ENCODE measurements at regions of chr1 and their contacts with region 1.

Region 1: GRCh38 chr1:19651141-19651737 is 7.1 kb downstream of the NBL1 start:
- DNase-seq: peak; percentile 53 to 71 (median 70)
- H3K4me3 ChIP-seq: peak overlapping the region in 2 of 7 experiments; percentile 20 to 30
- H3K27ac ChIP-seq: no peak overlapping the region
- H3K4me1 ChIP-seq: peaks cover 0 to 39% (median 25%) of the 10 kb centered on the region in 4 experiments
- H3K27me3 ChIP-seq: no peaks in the 10 kb centered on the region

Region 2: GRCh38 chr1:19341201-19342072 is 309.8 kb before region 1 on chr1:
- CTCF ChIA-PET with region 1: interaction called, 14 read pairs
- POLR2A ChIA-PET with region 1: no interaction called
- DNase-seq: peak; percentile 63 to 80 (median 70)
- H3K4me3 ChIP-seq: no peak overlapping the region
- H3K27ac ChIP-seq: no peak overlapping the region
- H3K4me1 ChIP-seq: peaks cover 0 to 12% (median 5%) of the 10 kb centered on the region in 4 experiments
- H3K27me3 ChIP-seq: no peaks in the 10 kb centered on the region

Region 3: GRCh38 chr1:19390901-19391595 is 260.2 kb before region 1 on chr1:
- CTCF ChIA-PET with region 1: interaction called, 40 read pairs
- POLR2A ChIA-PET with region 1: no interaction called
- DNase-seq: peak; percentile 93 to 98 (median 97)
- H3K4me3 ChIP-seq: peak overlapping the region in 6 of 7 experiments; percentile 40 to 77 (median 48)
- H3K27ac ChIP-seq: peak overlapping the region; percentile 62 to 78
- H3K4me1 ChIP-seq: peaks cover 12 to 49% (median 42%) of the 10 kb centered on the region in 4 experiments
- H3K27me3 ChIP-seq: no peaks in the 10 kb centered on the region

Region 4: GRCh38 chr1:19439464-19440171 is 211.6 kb before region 1 on chr1:
- CTCF ChIA-PET with region 1: interaction called, 37 read pairs
- POLR2A ChIA-PET with region 1: no interaction called
- DNase-seq: peak; percentile 48 to 60 (median 58)
- H3K4me3 ChIP-seq: no peak overlapping the region
- H3K27ac ChIP-seq: no peak overlapping the region
- H3K4me1 ChIP-seq: peaks cover 11 to 65% (median 49%) of the 10 kb centered on the region in 4 experiments
- H3K27me3 ChIP-seq: no peaks in the 10 kb centered on the region

Region 5: DNA sequence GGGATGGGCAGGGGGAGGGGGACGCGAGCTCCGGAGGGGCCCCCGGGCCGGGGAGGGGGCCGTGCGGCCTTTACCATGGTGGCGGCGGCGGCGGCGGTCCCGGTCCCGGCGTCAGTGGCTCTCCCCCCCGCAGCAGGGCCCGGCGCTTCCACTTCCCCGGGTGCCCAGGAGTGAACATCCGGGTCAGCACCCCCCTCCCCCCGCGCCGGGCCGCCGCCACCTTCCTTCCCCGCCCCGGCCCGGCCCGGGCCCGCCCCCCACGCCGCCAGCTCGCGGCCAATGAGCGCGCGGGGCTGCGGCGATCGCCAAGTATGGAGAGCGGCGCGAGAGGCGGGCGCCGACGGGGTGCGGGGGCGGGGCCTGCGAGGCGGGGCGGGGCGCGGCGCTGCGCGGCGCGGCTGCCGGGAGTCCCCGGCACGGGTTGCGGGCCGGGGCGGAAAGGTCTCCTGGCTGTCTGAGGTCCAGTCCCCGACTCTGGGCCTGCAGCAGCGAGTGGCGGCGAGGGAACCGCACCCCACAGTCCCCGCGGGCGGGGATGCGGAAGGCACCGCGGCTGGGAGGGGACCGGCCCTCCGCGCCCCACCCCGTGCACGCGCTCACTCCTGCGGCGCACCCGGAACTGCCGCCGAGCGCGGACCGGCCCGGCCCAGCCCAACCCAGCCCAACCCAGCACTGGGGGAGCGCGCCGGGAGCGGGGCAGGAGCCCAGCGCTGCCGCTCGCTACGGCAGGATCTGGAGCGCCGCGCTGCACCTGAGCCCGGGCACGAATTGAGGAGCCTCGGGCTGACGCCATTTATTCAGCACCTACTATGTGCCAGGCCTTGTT is 165.7 kb before region 1 on chr1 and contains the start of gene CAPZB:
- CTCF ChIA-PET with region 1: interaction called, 11 read pairs
- POLR2A ChIA-PET with region 1: no interaction called
- DNase-seq: peak; percentile 87 to 93 (median 89)
- H3K4me3 ChIP-seq: peak within 1 kb of the TSS; percentile 76 to 94 (median 87)
- H3K27ac ChIP-seq: peak within 1 kb of the TSS; percentile 70 to 93
- H3K4me1 ChIP-seq: peaks cover 24 to 61% (median 57%) of the 10 kb centered on the region in 4 experiments
- H3K27me3 ChIP-seq: no peaks in the 10 kb centered on the region

Measured in common myeloid progenitor, CD34-positive (primary cell).